ENCODE measurements at regions of chr15 and their contacts with region 1.

Region 1: GRCh38 chr15:89893696-89894455 is at the start of gene AP3S2:
- DNase-seq: peak; percentile 87
- H3K4me3 Mint-ChIP-seq: peak within 1 kb of the TSS; percentile 97
- H3K27ac Mint-ChIP-seq: peak within 1 kb of the TSS; percentile 94
- H3K4me1 Mint-ChIP-seq: peaks cover 36% of the 10 kb centered on the region
- H3K27me3 Mint-ChIP-seq: no peaks in the 10 kb centered on the region
- total RNA-seq, gene AP3S2: 21.4 and 24.7 TPM in 2 replicates

Region 2: DNA sequence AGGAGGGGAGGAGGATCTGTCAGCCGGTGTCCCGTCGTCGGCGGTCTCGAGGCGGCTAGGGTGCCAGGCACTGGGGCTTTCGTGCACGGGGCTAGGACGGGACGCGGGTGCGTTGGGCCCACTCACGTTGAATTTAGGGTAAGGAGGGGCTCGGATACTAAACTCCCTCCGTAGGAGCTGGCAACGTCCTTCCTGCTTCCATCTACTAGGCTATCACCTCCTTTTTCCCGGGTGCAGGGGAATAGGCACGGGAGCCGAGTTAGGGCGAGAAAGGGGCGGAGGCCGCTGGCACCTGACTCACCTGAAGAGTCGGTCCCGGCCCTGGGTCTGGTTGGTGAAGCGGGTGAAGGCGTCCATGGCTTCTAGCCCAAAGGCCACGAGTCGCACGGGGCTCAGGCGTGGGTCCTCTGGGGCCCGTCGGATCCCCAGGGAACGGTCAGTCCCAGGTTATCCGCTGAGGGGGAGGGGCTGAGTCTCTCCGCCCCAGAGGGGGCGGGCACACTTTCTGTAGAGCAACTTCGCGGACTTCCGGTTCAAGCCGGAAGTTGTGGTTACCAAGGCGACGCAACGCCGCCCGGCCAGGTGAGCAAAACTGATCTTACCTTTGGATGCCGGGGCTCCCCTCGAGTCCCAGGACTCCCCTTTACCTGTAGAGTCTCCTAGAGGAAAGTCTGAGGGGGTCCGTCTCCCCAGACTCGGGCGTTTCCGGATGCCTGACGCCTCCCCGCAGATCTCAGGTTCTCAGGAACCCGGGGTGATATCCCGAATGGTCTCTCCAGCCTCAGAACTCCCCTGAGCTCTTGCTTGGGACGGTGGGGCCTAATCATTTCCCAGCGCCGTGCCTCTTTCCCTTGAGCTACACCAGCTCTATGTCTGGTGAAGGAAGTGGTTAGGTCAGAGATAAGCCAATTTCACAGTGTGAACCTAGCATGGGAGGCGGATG is 203.3 kb before region 1 on chr15 and contains the starts of genes PEX11A and WDR93:
- intact Hi-C with region 1: loop called (anchors 5 kb)
- DNase-seq: peak; percentile 64
- H3K4me3 Mint-ChIP-seq: peak within 1 kb of the TSS; percentile 82
- H3K27ac Mint-ChIP-seq: peak within 1 kb of the TSS; percentile 65
- H3K4me1 Mint-ChIP-seq: peaks cover 10% of the 10 kb centered on the region
- H3K27me3 Mint-ChIP-seq: peaks cover 10% of the 10 kb centered on the region
- total RNA-seq, gene PEX11A: 0.66 and 1.0 TPM in 2 replicates
- total RNA-seq, gene WDR93: not detected in 2 replicates

Region 3: GRCh38 chr15:90001683-90002427 is 108.0 kb after region 1 on chr15:
- intact Hi-C with region 1: loop called (anchors 2 kb)
- DNase-seq: peak; percentile 53
- H3K4me3 Mint-ChIP-seq: peak overlapping the region; percentile 85
- H3K27ac Mint-ChIP-seq: peak overlapping the region; percentile 86
- H3K4me1 Mint-ChIP-seq: peaks cover 53% of the 10 kb centered on the region
- H3K27me3 Mint-ChIP-seq: peaks cover 11% of the 10 kb centered on the region

Region 4: DNA sequence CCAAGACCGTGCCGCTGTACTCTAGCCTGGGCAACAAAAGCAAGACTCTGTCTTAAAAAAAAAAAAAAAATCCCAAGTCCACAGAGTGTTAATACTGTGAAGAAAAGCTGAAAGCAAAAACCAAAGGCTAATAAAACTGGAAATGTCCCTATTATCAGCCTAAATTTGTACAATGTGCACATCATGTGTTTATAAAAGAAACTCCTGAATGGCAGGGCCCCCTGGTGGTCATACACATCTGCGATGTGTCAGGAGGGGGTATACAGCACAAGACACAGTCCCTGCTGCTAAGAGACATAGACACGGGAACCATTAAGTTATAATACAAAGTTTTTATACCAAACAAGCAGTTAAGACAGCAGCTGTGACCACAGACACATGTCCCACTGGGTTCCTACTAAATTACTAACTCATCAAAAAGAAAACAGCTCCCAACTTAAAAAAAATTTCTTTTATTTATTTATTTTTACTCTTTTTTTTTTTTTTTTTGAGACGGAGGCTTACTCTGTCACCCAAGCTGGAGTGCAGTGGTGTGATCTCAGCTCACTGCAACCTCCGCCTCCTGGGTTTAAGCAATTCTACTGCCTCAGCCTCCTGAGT is 177.4 kb after region 1 on chr15:
- intact Hi-C with region 1: loop called (anchors 1 kb)
- DNase-seq: peak; percentile 63
- H3K4me3 Mint-ChIP-seq: no peak overlapping the region
- H3K27ac Mint-ChIP-seq: peak overlapping the region; percentile 70
- H3K4me1 Mint-ChIP-seq: no peaks in the 10 kb centered on the region
- H3K27me3 Mint-ChIP-seq: no peaks in the 10 kb centered on the region

Region 5: GRCh38 chr15:90233376-90234095 is 339.7 kb after region 1 on chr15 and contains the start of gene CIB1:
- intact Hi-C with region 1: loop called (anchors 1 kb)
- DNase-seq: peak; percentile 98
- H3K4me3 Mint-ChIP-seq: peak within 1 kb of the TSS; percentile 93
- H3K27ac Mint-ChIP-seq: peak within 1 kb of the TSS; percentile 94
- H3K4me1 Mint-ChIP-seq: peaks cover 57% of the 10 kb centered on the region
- H3K27me3 Mint-ChIP-seq: no peaks in the 10 kb centered on the region
- total RNA-seq, gene CIB1: 144 and 145 TPM in 2 replicates

Measured in activated T-helper 1 cell treated with anti-CD3 and anti-CD28 coated beads, Interleukin-12 subunit alpha, Interleukin-12 subunit beta, Interleukin-2, Interleukin-4 antibody, amounts not matched to agents 30 ng/mL and 10 ng/mL and 1 ng/mL, durations not matched to agents 14 hours and 24 hours and 36 hours (primary cell).